Colonic mucosa (tissue), 4 donors: ENCODE measurements at regions of chr2 and their contacts with region 1.

Region 1: GRCh38 chr2:70142590-70143313 is 48.1 kb downstream of the C2orf42 start:
- DNase-seq: peak; percentile 99
- H3K4me3 ChIP-seq: peak overlapping the region; percentile 51
- H3K27ac ChIP-seq: peak overlapping the region; percentile 98
- H3K4me1 ChIP-seq: peaks cover 6% of the 10 kb centered on the region
- H3K27me3 ChIP-seq: no peaks in the 10 kb centered on the region
- CTCF ChIP-seq: peak; percentile 84

Region 2: GRCh38 chr2:70086838-70087701 is 55.7 kb before region 1 on chr2 and contains the start of gene PCBP1:
- intact Hi-C with region 1: loop called (anchors 5 kb)
- DNase-seq: peak; percentile 96
- H3K4me3 ChIP-seq: peak within 1 kb of the TSS; percentile 64
- H3K27ac ChIP-seq: peak within 1 kb of the TSS; percentile 99
- H3K4me1 ChIP-seq: peaks cover 9% of the 10 kb centered on the region
- H3K27me3 ChIP-seq: no peaks in the 10 kb centered on the region
- CTCF ChIP-seq: no peak
- total RNA-seq, gene PCBP1: 348 to 401 TPM

Region 3: DNA sequence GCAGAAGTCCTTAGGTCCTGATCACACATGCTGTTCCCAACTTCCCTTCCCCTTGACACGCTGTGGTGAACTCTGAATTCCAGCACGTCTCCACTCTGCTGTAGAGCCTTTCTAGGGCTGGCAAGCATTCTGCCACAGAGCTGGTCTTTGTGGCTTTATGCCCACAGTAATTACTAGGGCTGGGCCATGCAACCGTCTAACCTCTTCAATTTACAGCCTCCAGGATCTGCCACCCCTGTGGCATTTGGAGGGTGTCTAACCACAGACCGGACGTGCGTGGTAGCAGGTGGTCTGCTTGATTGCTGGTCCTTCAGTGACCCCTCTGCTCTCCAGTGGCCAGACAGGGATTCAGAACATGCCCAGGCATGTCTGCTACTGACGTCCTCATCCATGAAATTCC is 454.0 kb after region 1 on chr2:
- intact Hi-C with region 1: no loop called
- DNase-seq: no peak
- H3K4me3 ChIP-seq: no peak overlapping the region
- H3K27ac ChIP-seq: no peak overlapping the region
- H3K4me1 ChIP-seq: no peaks in the 10 kb centered on the region
- H3K27me3 ChIP-seq: no peaks in the 10 kb centered on the region
- CTCF ChIP-seq: no peak